ENCODE measurements at regions of chr3 and their contacts with region 1.

Region 1: GRCh38 chr3:17258823-17259436 is 374.2 kb downstream of the PLCL2 start:
- DNase-seq: peak; percentile 41 to 64 (median 44)
- ATAC-seq: peak; percentile 62; the same call in 1 of the 3 replicates
- H3K4me3 ChIP-seq: no peak overlapping the region
- H3K27ac ChIP-seq: no peak overlapping the region
- H3K4me1 ChIP-seq: no peaks in the 10 kb centered on the region
- H3K27me3 ChIP-seq: no peaks in the 10 kb centered on the region
- CTCF ChIP-seq: peak; percentile 46 to 87 (median 55); a peak in 5 of 6 replicates
- EP300 ChIP-seq: no peak
- POLR2A ChIP-seq: no peak
- RAD21 ChIP-seq: peak; percentile 86

Region 2: DNA sequence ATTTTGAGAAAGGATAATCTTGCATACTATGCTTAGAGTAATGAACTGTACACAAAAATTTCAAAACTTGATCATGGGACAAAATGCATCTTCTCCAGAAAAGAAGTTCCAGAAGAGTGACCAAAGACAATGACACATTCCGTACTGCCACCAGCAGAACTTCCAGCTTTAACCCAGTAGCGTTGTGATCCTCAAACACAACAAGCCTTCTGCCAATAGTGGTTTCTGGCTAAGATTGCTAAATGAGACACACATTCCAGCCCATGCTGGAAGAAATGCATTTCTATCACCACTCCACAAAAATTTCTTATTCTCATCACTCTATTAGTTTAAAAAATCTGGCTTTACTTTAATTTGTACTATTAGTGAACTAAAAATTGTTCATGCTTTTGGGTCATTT is 148.6 kb after region 1 on chr3:
- CTCF ChIA-PET with region 1: interaction called, 24 read pairs
- POLR2A ChIA-PET with region 1: no interaction called
- in situ Hi-C with region 1: loop called (anchors 5 kb)
- intact Hi-C with region 1: no loop called
- DNase-seq: no peak
- ATAC-seq: no peak
- H3K4me3 ChIP-seq: no peak overlapping the region
- H3K27ac ChIP-seq: no peak overlapping the region
- H3K4me1 ChIP-seq: no peaks in the 10 kb centered on the region
- H3K27me3 ChIP-seq: no peaks in the 10 kb centered on the region
- CTCF ChIP-seq: no peak
- EP300 ChIP-seq: no peak
- POLR2A ChIP-seq: no peak
- RAD21 ChIP-seq: no peak

Region 3: DNA sequence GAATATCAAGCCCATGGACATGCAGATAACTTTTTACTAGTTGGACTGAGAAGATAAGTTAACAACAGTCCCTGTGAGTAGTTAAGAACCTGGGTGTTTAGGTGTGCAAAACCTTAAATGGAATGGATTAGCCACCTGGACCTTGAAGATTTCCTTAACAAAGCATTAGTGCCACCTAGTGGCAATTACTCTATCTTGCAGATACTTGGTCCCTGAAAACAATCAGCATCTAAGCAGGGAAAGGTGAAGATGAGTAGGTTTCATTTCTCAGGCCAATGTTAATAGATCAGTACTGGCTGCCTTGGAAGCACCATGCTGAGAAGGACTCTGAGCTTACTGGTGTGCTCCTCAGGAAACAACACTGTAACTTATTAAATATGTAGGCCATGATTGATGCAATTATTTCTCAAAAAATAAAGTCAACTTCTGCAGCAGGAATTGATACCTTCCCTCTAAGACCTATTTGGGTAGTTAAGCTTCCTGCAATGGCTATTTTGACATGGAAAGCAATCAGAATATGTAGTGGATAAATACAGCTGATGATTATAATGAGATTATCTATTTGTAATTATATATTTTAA is 154.1 kb after region 1 on chr3:
- CTCF ChIA-PET with region 1: interaction called, 24 read pairs
- POLR2A ChIA-PET with region 1: no interaction called
- in situ Hi-C with region 1: loop called (anchors 5 kb)
- intact Hi-C with region 1: loop called (anchors 1 kb)
- DNase-seq: peak; percentile 46 to 75 (median 54)
- ATAC-seq: peak; percentile 97
- H3K4me3 ChIP-seq: no peak overlapping the region
- H3K27ac ChIP-seq: no peak overlapping the region
- H3K4me1 ChIP-seq: no peaks in the 10 kb centered on the region
- H3K27me3 ChIP-seq: no peaks in the 10 kb centered on the region
- CTCF ChIP-seq: peak; percentile 69 to 91 (median 80)
- EP300 ChIP-seq: no peak
- POLR2A ChIP-seq: no peak
- RAD21 ChIP-seq: peak; percentile 94

Region 4: DNA sequence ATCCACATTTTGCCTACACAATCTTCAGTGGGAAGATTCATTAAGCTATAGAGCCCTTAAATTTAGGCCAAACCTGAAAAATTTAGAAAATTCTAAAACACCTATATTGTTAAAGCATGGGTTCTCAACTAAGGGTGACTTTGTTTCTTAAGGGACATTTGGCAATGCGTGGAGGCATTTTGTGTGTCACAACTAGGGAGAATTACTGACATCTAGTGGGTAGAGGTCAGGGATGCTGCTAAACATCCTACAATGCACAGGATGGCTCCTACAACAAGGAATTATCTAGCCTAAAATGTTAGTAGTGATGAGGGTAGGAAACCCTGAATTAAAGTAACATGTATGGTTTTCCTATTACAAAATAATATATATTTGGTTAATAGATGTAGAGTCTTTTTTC is 427.7 kb after region 1 on chr3:
- CTCF ChIA-PET with region 1: no interaction called
- POLR2A ChIA-PET with region 1: no interaction called
- in situ Hi-C with region 1: no loop called
- intact Hi-C with region 1: loop called (anchors 10 kb)
- DNase-seq: peak in 1 of 4 experiments; percentile 53
- ATAC-seq: peak; percentile 84
- H3K4me3 ChIP-seq: no peak overlapping the region
- H3K27ac ChIP-seq: no peak overlapping the region
- H3K4me1 ChIP-seq: no peaks in the 10 kb centered on the region
- H3K27me3 ChIP-seq: no peaks in the 10 kb centered on the region
- CTCF ChIP-seq: peak in 2 of 3 experiments; percentile 38 to 48; a peak in 3 of 6 replicates
- EP300 ChIP-seq: no peak
- POLR2A ChIP-seq: no peak
- RAD21 ChIP-seq: peak in 1 of 2 experiments; percentile 73; a peak in 2 of 4 replicates

Region 5: DNA sequence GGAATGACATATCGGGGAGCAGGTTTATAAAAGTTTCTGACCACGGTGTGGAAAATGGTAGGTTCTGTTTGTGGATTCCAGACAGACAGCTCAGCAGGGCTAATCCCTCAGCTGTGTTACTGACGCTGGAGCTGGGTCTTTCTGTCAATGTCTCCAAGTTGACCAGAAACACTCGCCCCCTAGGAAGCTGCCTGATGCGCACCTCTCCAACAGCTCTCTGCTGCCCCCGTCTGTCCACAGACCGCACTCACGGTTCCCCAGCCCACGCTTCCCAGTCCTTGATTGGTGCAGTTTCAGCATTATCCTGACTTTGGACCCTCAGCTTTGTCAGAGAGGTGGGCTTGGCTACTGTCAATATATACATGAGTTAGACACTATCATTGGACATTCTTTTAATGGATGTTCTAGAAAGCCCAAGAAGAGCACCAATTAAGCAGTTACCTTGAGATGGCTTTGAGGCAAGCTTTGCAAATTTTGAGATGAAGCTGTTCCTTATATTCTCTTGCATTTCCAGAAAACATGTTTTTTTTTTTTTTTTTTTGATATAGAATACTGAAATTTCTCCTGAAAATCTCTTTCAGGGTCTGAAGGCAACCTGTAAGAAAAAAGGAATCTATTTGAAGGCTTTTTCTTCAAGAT is 582.4 kb after region 1 on chr3:
- CTCF ChIA-PET with region 1: interaction called, 10 read pairs
- POLR2A ChIA-PET with region 1: no interaction called
- in situ Hi-C with region 1: no loop called
- intact Hi-C with region 1: loop called (anchors 2 kb)
- DNase-seq: peak; percentile 81 to 87 (median 84)
- ATAC-seq: peak; percentile 99
- H3K4me3 ChIP-seq: no peak overlapping the region
- H3K27ac ChIP-seq: no peak overlapping the region
- H3K4me1 ChIP-seq: no peaks in the 10 kb centered on the region
- H3K27me3 ChIP-seq: peaks cover 0 to 5% of the 10 kb centered on the region in 2 experiments; a peak in 3 of 5 replicates
- CTCF ChIP-seq: peak; percentile 98 to 99 (median 99)
- EP300 ChIP-seq: peak; percentile 19; the same call in 1 of the 2 replicates
- POLR2A ChIP-seq: no peak
- RAD21 ChIP-seq: peak; percentile 99

Region 6: GRCh38 chr3:17935222-17935621 is 676.3 kb after region 1 on chr3:
- CTCF ChIA-PET with region 1: no interaction called
- POLR2A ChIA-PET with region 1: no interaction called
- in situ Hi-C with region 1: no loop called
- intact Hi-C with region 1: no loop called
- DNase-seq: no peak
- ATAC-seq: no peak
- H3K4me3 ChIP-seq: no peak overlapping the region
- H3K27ac ChIP-seq: no peak overlapping the region
- H3K4me1 ChIP-seq: no peaks in the 10 kb centered on the region
- H3K27me3 ChIP-seq: peaks cover 3 to 9% of the 10 kb centered on the region in 2 experiments; a peak in 3 of 5 replicates
- CTCF ChIP-seq: no peak
- EP300 ChIP-seq: no peak
- POLR2A ChIP-seq: no peak
- RAD21 ChIP-seq: no peak

Region 7: GRCh38 chr3:18389108-18389733 is 1130.3 kb after region 1 on chr3:
- CTCF ChIA-PET with region 1: interaction called, 8 read pairs
- POLR2A ChIA-PET with region 1: no interaction called
- in situ Hi-C with region 1: no loop called
- intact Hi-C with region 1: loop called (anchors 5 kb)
- DNase-seq: peak in 2 of 4 experiments; percentile 16 to 37
- ATAC-seq: no peak
- H3K4me3 ChIP-seq: no peak overlapping the region
- H3K27ac ChIP-seq: no peak overlapping the region
- H3K4me1 ChIP-seq: no peaks in the 10 kb centered on the region
- H3K27me3 ChIP-seq: no peaks in the 10 kb centered on the region
- CTCF ChIP-seq: peak; percentile 13 to 59 (median 42); a peak in 5 of 6 replicates
- EP300 ChIP-seq: no peak
- POLR2A ChIP-seq: no peak
- RAD21 ChIP-seq: peak; percentile 47 to 64